ENCODE measurements at regions of chr9 and their contacts with region 1.

Region 1: GRCh38 chr9:97632985-97633858 is at the starts of genes NCBP1 and TSTD2:
- DNase-seq: peak; percentile 98
- ATAC-seq: peak; percentile 91
- H3K4me3 Mint-ChIP-seq: peak within 1 kb of the TSS; percentile 92
- H3K27ac Mint-ChIP-seq: peak within 1 kb of the TSS; percentile 99
- H3K4me1 Mint-ChIP-seq: peaks cover 48% of the 10 kb centered on the region
- H3K27me3 Mint-ChIP-seq: no peaks in the 10 kb centered on the region
- total RNA-seq, gene NCBP1: 42.2 to 43.0 TPM
- total RNA-seq, gene TSTD2: 12.7 to 15.0 TPM

Region 2: DNA sequence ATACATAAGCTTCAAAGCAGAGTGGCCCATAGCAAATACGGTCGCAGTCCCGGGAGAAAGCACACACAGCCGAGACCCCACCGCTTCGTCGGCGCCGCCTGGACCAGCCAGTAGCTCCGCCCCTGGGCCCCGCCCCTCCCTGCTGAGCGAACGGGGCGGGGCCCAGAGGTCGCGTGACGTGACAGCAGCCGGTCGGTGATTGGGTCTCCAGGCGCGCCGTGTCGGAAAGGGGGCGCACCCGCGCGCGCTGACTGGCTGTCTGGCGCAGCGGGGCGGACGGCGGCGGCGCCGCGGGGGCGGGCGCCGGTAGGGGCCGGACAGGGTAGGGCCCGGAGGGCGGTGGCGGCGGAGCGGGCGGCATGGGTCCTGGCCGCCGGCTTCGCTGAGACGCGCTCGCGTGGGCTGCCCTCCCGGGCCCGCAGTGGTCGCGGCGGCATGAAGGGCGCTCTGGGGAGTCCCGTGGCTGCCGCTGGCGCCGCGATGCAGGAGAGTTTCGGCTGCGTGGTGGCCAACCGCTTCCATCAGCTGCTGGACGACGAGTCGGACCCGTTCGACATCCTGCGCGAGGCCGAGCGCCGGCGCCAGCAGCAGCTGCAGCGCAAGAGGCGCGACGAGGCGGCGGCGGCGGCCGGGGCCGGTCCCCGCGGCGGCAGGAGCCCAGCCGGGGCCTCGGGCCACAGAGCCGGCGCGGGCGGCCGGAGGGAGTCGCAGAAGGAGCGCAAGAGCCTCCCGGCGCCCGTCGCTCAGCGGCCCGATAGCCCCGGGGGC is 1183.2 kb before region 1 on chr9 and contains the start of gene HABP4:
- CTCF ChIA-PET with region 1: interaction called, 3 read pairs
- POLR2A ChIA-PET with region 1: no interaction called
- intact Hi-C with region 1: loop called in 1 of 2 experiments (anchors 1 kb)
- DNase-seq: peak; percentile 98
- ATAC-seq: peak; percentile 96
- H3K4me3 Mint-ChIP-seq: peak within 1 kb of the TSS; percentile 84
- H3K27ac Mint-ChIP-seq: peak within 1 kb of the TSS; percentile 73
- H3K4me1 Mint-ChIP-seq: peaks cover 24% of the 10 kb centered on the region
- H3K27me3 Mint-ChIP-seq: peaks cover 9% of the 10 kb centered on the region
- total RNA-seq, gene HABP4: 5.8 to 7.3 TPM

Region 3: DNA sequence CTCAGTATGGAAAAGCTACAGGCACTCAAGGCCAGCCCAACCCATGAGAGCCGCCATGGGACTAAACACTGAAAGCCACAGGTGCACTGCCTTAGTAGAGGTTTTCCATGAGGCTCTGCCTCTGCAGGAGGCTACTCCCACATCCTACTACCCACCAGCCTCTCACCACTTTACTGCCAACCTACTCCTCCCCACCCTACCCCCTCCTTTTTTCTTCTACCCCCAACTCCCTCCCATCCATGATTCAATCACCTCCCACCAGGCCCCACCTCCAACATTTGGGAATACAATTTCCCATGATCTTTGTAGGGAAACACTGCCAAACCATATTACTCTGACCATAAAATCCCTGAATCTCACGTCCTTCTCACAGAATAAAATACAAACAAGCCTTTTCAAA is 492.7 kb before region 1 on chr9:
- CTCF ChIA-PET with region 1: no interaction called
- POLR2A ChIA-PET with region 1: no interaction called
- intact Hi-C with region 1: no loop called
- DNase-seq: no peak
- ATAC-seq: no peak
- H3K4me3 Mint-ChIP-seq: no peak overlapping the region
- H3K27ac Mint-ChIP-seq: no peak overlapping the region
- H3K4me1 Mint-ChIP-seq: no peaks in the 10 kb centered on the region
- H3K27me3 Mint-ChIP-seq: no peaks in the 10 kb centered on the region

Region 4: DNA sequence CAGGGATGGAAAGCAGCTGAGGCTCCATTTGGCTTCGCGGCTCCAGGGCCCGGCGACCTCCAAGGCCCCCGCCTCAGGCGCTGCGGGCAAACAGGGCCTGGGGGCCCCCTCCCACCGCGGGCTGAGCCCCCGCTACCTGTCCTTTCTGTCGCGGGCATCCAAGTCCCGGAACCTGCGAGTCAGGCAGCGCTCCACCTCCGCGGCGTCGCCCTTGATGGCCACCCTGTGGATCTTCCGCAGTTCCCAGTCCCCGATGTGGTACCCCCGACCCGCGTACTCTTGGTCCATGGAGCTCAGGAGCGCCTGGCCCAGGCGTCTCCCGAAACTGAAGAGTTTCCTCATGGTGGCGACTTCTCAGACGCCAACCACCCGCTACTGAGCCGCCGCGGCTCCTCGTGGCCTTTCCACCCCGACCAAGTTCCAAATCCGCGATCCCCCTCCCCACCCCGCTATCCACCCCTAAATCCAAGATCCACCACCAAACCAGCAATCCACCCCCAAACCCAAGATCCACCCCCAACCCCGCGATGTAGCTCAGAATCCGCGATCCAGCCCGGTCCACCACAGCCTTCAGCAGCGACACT is 412.2 kb before region 1 on chr9:
- CTCF ChIA-PET with region 1: no interaction called
- POLR2A ChIA-PET with region 1: no interaction called
- intact Hi-C with region 1: no loop called
- DNase-seq: no peak
- ATAC-seq: peak; percentile 37
- H3K4me3 Mint-ChIP-seq: peak overlapping the region; percentile 66
- H3K27ac Mint-ChIP-seq: peak overlapping the region; percentile 6
- H3K4me1 Mint-ChIP-seq: peaks cover 5% of the 10 kb centered on the region
- H3K27me3 Mint-ChIP-seq: peaks cover 35% of the 10 kb centered on the region

Region 5: DNA sequence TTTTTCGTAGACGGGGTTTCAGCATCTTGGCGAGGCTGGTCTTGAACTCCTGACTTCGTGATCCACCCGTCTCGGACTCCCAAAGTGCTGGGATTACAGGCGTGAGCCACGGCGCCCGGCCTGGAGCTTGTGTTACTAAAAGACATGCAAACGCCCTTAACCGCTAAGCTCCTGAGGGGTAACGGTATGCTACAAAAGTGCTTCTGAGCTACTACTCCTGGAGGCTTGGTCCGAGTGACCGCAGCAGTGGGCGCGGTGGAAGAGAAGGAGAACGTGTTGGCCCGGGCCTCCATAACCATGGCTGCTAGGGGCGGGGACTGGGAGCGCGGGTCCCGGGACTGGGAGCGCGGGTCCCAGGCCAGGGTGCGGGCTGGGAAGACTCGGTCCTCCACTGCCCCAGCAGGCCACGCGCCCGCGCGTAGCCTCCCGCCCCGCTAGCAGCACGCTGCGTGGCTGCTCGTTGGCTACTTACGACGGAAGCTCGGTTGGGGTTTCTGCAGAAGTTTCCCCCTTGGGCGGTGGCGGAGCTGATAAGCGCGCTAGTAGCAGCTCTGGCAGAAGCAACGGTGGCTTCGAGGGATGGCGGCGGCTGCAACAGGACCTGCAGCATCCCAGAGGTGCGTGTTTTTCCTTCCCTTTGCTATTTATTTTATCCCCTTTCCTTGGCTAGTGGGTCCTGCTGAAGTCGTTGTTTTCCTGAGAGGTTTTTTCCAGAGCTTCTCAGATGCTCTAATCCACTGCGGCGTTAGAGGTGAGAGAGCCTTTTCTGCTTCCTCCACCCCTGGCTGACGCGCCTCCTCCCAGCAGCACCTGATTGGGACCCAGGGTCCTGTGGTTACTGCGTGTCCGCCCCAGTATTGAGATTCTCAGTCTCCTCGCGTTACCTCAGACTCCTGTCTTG is 395.0 kb before region 1 on chr9:
- CTCF ChIA-PET with region 1: no interaction called
- POLR2A ChIA-PET with region 1: interaction called, 4 read pairs
- intact Hi-C with region 1: loop called in 1 of 2 experiments (anchors 1 kb)
- DNase-seq: peak; percentile 91
- ATAC-seq: peak; percentile 95
- H3K4me3 Mint-ChIP-seq: peak overlapping the region; percentile 93
- H3K27ac Mint-ChIP-seq: peak overlapping the region; percentile 97
- H3K4me1 Mint-ChIP-seq: peaks cover 12% of the 10 kb centered on the region
- H3K27me3 Mint-ChIP-seq: no peaks in the 10 kb centered on the region

Region 6: GRCh38 chr9:97615439-97616072 is 17.7 kb before region 1 on chr9:
- CTCF ChIA-PET with region 1: interaction called, 21 read pairs
- POLR2A ChIA-PET with region 1: interaction called, 3 read pairs
- intact Hi-C with region 1: no loop called
- DNase-seq: peak; percentile 72
- ATAC-seq: peak; percentile 39
- H3K4me3 Mint-ChIP-seq: no peak overlapping the region
- H3K27ac Mint-ChIP-seq: no peak overlapping the region
- H3K4me1 Mint-ChIP-seq: peaks cover 15% of the 10 kb centered on the region
- H3K27me3 Mint-ChIP-seq: no peaks in the 10 kb centered on the region

Region 7: GRCh38 chr9:97803167-97804058 is 170.2 kb after region 1 on chr9:
- CTCF ChIA-PET with region 1: no interaction called
- POLR2A ChIA-PET with region 1: no interaction called
- intact Hi-C with region 1: loop called in 1 of 2 experiments (anchors 1 kb)
- DNase-seq: peak; percentile 86
- ATAC-seq: peak; percentile 90
- H3K4me3 Mint-ChIP-seq: peak overlapping the region; percentile 72
- H3K27ac Mint-ChIP-seq: peak overlapping the region; percentile 67
- H3K4me1 Mint-ChIP-seq: peaks cover 10% of the 10 kb centered on the region
- H3K27me3 Mint-ChIP-seq: peaks cover 21% of the 10 kb centered on the region

Region 8: DNA sequence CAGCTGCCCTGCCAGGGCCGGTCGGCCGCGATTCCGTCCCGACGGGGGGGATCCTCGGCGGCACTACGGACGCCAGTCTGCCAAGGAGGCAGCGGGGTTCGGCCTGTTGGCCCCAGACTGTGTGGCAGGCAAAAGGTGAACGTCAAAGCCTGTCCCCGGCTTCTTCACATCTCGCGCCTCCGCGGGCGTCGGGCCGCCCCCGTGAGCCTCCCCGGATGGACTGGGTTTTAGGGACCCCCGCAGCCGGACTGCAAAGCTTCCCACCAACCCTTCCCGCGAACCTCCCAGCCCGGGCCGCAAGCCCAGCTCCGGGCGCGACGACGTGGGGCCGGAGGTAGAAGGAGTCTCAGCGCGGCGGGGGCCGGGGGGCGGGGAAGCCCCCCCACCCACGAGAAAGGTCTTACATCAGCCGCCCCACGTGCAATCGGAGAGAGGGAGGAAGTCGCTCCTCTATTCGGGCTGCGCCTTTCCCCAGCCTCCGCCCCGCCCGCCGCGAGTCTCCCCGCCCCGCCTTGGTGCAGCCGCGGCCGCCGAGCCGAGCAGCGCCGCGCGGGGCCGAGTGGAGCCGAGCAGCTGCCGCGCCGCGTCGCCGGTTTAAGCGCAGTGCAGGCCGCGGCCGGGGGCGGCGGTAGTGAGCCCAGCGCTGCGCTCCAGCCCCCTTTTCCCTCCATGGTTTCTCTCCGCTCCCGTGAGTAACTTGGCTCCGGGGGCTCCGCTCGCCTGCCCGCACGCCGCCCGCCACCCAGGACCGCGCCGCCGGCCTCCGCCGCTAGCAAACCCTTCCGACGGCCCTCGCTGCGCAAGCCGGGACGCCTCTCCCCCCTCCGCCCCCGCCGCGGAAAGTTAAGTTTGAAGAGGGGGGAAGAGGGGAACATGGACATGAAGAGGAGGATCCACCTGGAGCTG is 349.7 kb after region 1 on chr9 and contains the start of gene ANP32B:
- CTCF ChIA-PET with region 1: no interaction called
- POLR2A ChIA-PET with region 1: interaction called, 3 read pairs
- intact Hi-C with region 1: loop called (anchors 1 to 2 kb)
- DNase-seq: peak; percentile 98
- ATAC-seq: peak; percentile 89
- H3K4me3 Mint-ChIP-seq: peak within 1 kb of the TSS; percentile 81
- H3K27ac Mint-ChIP-seq: peak within 1 kb of the TSS; percentile 92
- H3K4me1 Mint-ChIP-seq: peaks cover 49% of the 10 kb centered on the region
- H3K27me3 Mint-ChIP-seq: no peaks in the 10 kb centered on the region
- total RNA-seq, gene ANP32B: 367 to 440 TPM

Measured in activated CD4-positive, alpha-beta T cell treated with anti-CD3 and anti-CD28 coated beads for 36 hours (primary cell).